GM13976 (cell line): ENCODE measurements at regions of chr22 and their contacts with region 1.

Region 1: DNA sequence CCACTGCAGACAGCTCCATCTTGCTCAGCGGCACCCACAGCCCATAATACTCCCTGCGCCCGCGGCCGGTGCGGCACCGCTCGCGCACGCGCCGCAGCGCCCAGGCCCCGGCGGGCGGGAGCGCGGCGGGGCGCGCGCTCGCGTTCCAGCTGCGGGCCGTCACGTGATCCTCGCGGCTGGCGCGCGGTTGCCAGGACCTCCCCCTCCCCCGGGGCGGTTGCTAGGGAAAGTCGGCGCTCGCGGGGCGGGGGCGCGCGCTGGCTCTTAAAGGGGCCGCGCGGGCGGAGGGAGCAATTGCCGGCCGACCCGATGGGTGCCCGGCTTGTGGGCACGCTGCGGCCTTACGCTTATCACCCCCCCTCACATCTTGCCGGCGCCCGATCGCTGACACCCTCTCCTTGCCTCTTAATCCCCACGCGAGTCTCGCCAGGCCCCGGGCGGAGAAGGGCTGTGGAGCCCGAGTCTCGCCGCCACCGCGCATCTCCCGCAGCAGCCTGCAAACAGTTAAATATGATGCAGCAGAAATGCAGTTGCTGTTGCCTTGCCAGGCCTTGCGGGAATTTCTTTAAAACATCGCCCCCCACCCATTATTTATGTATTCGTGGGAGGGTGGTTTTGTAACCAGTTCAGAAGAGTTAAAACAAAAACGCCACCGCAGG is at the start of gene CBX6:
- DNase-seq: peak; percentile 96
- CTCF ChIP-seq: no peak

Region 2: GRCh38 chr22:38996105-38996504 is 123.8 kb after region 1 on chr22:
- in situ Hi-C with region 1: loop called (anchors 10 kb)
- DNase-seq: no peak
- CTCF ChIP-seq: no peak

Region 3: GRCh38 chr22:39123751-39124601 is 251.7 kb after region 1 on chr22:
- in situ Hi-C with region 1: loop called (anchors 10 kb)
- DNase-seq: peak; percentile 32
- CTCF ChIP-seq: no peak